ENCODE measurements at regions of chr19 and their contacts with region 1.

Region 1: GRCh38 chr19:13574933-13575332 is 68.7 kb upstream of the CACNA1A start:
- DNase-seq: no peak
- H3K4me3 Mint-ChIP-seq: no peak overlapping the region
- H3K27ac Mint-ChIP-seq: no peak overlapping the region
- H3K4me1 Mint-ChIP-seq: no peaks in the 10 kb centered on the region
- H3K27me3 Mint-ChIP-seq: peaks cover 3% of the 10 kb centered on the region

Region 2: DNA sequence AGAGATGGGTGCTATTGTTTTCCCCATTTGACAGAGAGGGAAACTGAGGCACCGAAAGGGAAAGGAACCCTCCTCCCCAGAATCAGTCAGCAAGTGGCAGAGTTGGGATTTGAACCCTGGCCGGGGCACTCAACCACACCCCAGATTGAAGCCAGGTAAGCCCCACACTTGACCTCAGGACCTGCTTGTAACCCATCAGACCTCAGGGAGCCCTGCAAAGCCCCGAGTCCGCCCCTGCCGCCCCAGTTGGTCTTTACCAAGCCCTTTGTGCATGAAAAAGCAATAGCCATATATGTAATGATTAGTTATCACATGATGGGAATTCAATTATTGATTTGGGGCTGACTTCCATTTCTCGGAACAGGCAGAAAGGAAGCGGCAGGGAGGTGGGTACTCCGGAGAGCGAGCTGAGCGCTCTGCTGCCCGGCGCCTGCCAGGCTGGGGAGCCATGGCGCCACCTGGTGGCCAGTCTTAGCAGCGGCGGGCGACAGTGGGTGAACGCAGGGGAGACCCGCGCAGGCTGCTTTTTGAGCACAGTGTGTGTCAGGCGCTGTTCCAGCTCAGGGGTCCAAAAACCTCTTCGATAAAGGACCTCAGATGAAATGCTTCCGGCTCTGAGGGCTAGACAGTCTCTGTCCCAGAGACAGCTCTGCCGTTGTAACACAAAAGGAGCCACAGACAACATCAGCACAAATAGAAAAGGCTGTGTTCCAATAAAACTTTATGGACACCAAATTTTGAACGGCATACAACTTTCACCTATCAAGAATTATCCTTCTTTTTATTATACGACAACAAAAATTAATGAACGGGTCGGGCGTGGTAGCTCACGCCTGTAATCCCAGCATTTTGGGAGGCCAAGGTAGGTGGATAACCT is 14.3 kb after region 1 on chr19:
- CTCF ChIA-PET with region 1: interaction called, 34 read pairs
- POLR2A ChIA-PET with region 1: no interaction called
- DNase-seq: peak; percentile 81
- H3K4me3 Mint-ChIP-seq: no peak overlapping the region
- H3K27ac Mint-ChIP-seq: no peak overlapping the region
- H3K4me1 Mint-ChIP-seq: no peaks in the 10 kb centered on the region
- H3K27me3 Mint-ChIP-seq: no peaks in the 10 kb centered on the region